Naive thymus-derived CD4-positive, alpha-beta T cell (primary cell): ENCODE measurements at regions of chr12 and their contacts with region 1.

Region 1: GRCh38 chr12:50763639-50764285 is at the start of gene ATF1:
- DNase-seq: peak; percentile 78 to 92 (median 90)
- ATAC-seq: peak; percentile 90
- H3K4me3 ChIP-seq: peak within 1 kb of the TSS; percentile 69
- H3K4me3 Mint-ChIP-seq: peak within 1 kb of the TSS; percentile 89 to 97 (median 91)
- H3K27ac ChIP-seq: peak within 1 kb of the TSS; percentile 94
- H3K27ac Mint-ChIP-seq: peak within 1 kb of the TSS; percentile 92 to 99 (median 98)
- H3K4me1 ChIP-seq: peaks cover 12 to 14% of the 10 kb centered on the region in 2 donors
- H3K4me1 Mint-ChIP-seq: peaks cover 30 to 51% (median 45%) of the 10 kb centered on the region in 7 donors
- H3K27me3 ChIP-seq: no peaks in the 10 kb centered on the region
- H3K27me3 Mint-ChIP-seq: no peaks in the 10 kb centered on the region
- total RNA-seq, gene ATF1: 23.8 to 53.9 (median 51.3) TPM

Region 2: GRCh38 chr12:50411051-50411660 is 352.6 kb before region 1 on chr12:
- CTCF ChIA-PET with region 1: no interaction called
- POLR2A ChIA-PET with region 1: no interaction called
- intact Hi-C with region 1: no loop called
- DNase-seq: no peak
- ATAC-seq: no peak
- H3K4me3 ChIP-seq: no peak overlapping the region
- H3K4me3 Mint-ChIP-seq: no peak overlapping the region
- H3K27ac ChIP-seq: no peak overlapping the region
- H3K27ac Mint-ChIP-seq: no peak overlapping the region
- H3K4me1 ChIP-seq: no peaks in the 10 kb centered on the region
- H3K4me1 Mint-ChIP-seq: peaks cover 12 to 39% (median 32%) of the 10 kb centered on the region in 7 donors
- H3K27me3 ChIP-seq: no peaks in the 10 kb centered on the region
- H3K27me3 Mint-ChIP-seq: no peaks in the 10 kb centered on the region

Region 3: GRCh38 chr12:50517456-50518048 is 246.2 kb before region 1 on chr12:
- CTCF ChIA-PET with region 1: no interaction called
- POLR2A ChIA-PET with region 1: no interaction called
- intact Hi-C with region 1: loop called in 1 of 2 experiments (anchors 2 kb)
- DNase-seq: peak in 5 of 9 donors; percentile 19 to 53 (median 36)
- ATAC-seq: peak; percentile 82
- H3K4me3 ChIP-seq: no peak overlapping the region
- H3K4me3 Mint-ChIP-seq: no peak overlapping the region
- H3K27ac ChIP-seq: peak overlapping the region; percentile 65
- H3K27ac Mint-ChIP-seq: no peak overlapping the region
- H3K4me1 ChIP-seq: peaks cover 19 to 81% of the 10 kb centered on the region in 2 donors
- H3K4me1 Mint-ChIP-seq: peaks cover 43 to 65% (median 58%) of the 10 kb centered on the region in 7 donors
- H3K27me3 ChIP-seq: no peaks in the 10 kb centered on the region
- H3K27me3 Mint-ChIP-seq: no peaks in the 10 kb centered on the region

Region 4: GRCh38 chr12:50564237-50564947 is 199.4 kb before region 1 on chr12:
- CTCF ChIA-PET with region 1: no interaction called
- POLR2A ChIA-PET with region 1: no interaction called
- intact Hi-C with region 1: no loop called
- DNase-seq: no peak
- ATAC-seq: no peak
- H3K4me3 ChIP-seq: no peak overlapping the region
- H3K4me3 Mint-ChIP-seq: peak overlapping the region in 3 of 10 donors; percentile 4 to 52 (median 24)
- H3K27ac ChIP-seq: no peak overlapping the region
- H3K27ac Mint-ChIP-seq: peak overlapping the region in 6 of 9 donors; percentile 3 to 67 (median 34)
- H3K4me1 ChIP-seq: no peaks in the 10 kb centered on the region
- H3K4me1 Mint-ChIP-seq: peaks cover 30 to 84% (median 75%) of the 10 kb centered on the region in 7 donors
- H3K27me3 ChIP-seq: no peaks in the 10 kb centered on the region
- H3K27me3 Mint-ChIP-seq: no peaks in the 10 kb centered on the region

Region 5: GRCh38 chr12:50715174-50715573 is 48.6 kb before region 1 on chr12:
- CTCF ChIA-PET with region 1: no interaction called
- POLR2A ChIA-PET with region 1: no interaction called
- intact Hi-C with region 1: no loop called
- DNase-seq: no peak
- ATAC-seq: no peak
- H3K4me3 ChIP-seq: no peak overlapping the region
- H3K4me3 Mint-ChIP-seq: no peak overlapping the region
- H3K27ac ChIP-seq: no peak overlapping the region
- H3K27ac Mint-ChIP-seq: peak overlapping the region in 4 of 9 donors; percentile 17 to 45 (median 18)
- H3K4me1 ChIP-seq: no peaks in the 10 kb centered on the region
- H3K4me1 Mint-ChIP-seq: no peaks in the 10 kb centered on the region
- H3K27me3 ChIP-seq: no peaks in the 10 kb centered on the region
- H3K27me3 Mint-ChIP-seq: no peaks in the 10 kb centered on the region

Region 6: DNA sequence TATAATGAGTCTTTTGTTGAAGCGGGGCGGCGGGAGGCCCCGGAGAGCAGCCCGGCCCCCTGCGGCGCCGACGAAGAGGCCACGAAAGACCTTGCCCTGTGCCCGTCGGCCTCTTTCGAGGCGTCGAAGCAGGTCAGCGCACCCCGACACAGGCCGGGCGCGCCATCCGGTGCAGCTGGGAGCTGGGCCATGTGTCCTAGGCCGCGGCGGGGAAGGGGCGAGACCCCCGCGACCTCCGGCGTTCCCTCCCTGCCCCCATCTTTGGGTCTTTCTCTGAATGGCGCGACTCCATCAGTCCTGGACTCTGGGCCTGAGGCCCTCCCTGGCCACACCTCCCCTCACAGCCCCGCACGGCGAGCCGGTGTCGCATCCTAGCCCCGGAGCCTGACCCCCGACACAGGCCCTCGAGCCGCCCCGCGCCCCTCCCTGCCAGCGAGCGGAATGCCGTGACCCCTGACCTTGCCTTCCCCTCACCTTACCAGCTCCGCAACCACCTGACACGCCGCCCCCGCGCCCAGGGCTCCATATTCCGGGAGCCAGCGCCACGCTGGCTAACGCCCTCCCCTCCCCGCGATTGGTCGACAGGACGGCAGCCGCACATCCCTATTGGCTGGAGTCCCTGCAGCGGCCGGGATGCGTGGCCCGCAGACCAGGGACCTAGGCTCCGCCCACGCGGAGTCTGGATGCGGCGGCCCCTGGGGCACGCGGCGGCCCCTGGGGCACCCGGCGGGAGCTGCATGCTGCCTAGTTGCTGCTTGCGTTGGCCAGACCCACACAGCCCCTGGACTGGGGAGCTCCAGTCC is 262.3 kb after region 1 on chr12 and contains the start of gene SLC11A2:
- CTCF ChIA-PET with region 1: interaction called, 4 read pairs
- POLR2A ChIA-PET with region 1: interaction called, 33 read pairs
- intact Hi-C with region 1: loop called (anchors 1 to 2 kb)
- DNase-seq: peak; percentile 79 to 93 (median 88)
- ATAC-seq: peak; percentile 96
- H3K4me3 ChIP-seq: peak within 1 kb of the TSS; percentile 86
- H3K4me3 Mint-ChIP-seq: peak within 1 kb of the TSS; percentile 91 to 100 (median 98)
- H3K27ac ChIP-seq: peak within 1 kb of the TSS; percentile 80
- H3K27ac Mint-ChIP-seq: peak within 1 kb of the TSS; percentile 90 to 99 (median 97)
- H3K4me1 ChIP-seq: peaks cover 14 to 22% of the 10 kb centered on the region in 2 donors
- H3K4me1 Mint-ChIP-seq: peaks cover 39 to 65% (median 54%) of the 10 kb centered on the region in 7 donors
- H3K27me3 ChIP-seq: no peaks in the 10 kb centered on the region
- H3K27me3 Mint-ChIP-seq: peaks cover 0 to 13% (median 0%) of the 10 kb centered on the region in 5 donors
- total RNA-seq, gene SLC11A2: 49.3 to 65.4 (median 61.0) TPM

Region 7: DNA sequence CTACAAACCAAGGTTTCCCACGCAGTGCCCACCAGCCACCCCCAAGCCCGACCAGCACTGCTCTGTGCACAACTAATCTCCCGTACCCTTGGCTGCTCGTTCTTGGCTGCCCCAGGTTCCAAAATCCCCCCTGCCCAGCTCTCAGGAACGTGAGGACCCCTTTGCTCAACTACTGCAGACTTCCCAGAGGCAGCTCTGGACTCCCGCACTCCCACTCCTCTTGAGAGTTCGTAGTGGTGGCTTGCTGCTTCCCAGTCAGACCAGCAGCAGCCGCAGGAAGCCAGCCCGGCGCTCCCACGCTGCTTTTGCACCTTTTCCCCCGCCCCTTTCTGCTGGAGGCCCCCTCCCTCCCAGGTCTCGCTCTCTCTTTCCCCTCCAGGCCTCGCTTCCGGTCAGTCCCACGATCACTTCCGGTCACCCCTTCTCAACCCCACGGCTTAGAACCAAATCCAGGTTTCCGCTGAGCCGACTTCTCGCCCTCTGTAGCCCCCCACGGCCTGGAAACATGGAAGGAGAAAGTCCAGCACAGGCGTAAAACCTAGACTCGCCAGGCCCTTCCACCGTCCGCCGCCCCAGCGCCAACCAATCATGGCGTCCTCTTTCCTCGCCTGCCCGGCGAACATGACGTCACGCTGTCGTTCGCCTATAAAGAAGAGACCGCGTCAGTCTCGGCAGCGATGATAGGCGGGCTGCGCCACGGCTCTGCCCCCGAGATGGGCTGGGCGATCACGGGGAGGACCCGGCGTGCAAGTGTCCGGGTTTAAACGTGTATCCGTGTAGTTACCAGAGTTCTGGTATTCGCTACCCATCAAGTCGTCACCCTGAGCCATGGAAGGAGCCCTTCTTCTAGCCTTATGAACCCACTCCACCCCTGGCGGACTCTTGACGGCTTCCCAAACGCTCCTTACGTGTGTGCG is 409.0 kb after region 1 on chr12 and contains the start of gene TFCP2:
- CTCF ChIA-PET with region 1: no interaction called
- POLR2A ChIA-PET with region 1: no interaction called
- intact Hi-C with region 1: loop called in 1 of 2 experiments (anchors 1 kb)
- DNase-seq: peak; percentile 81 to 93 (median 91)
- ATAC-seq: peak; percentile 98
- H3K4me3 ChIP-seq: peak within 1 kb of the TSS; percentile 98
- H3K4me3 Mint-ChIP-seq: peak within 1 kb of the TSS in 5 of 10 donors; percentile 77 to 89 (median 87)
- H3K27ac ChIP-seq: peak within 1 kb of the TSS; percentile 99
- H3K27ac Mint-ChIP-seq: peak within 1 kb of the TSS in 6 of 9 donors; percentile 56 to 90 (median 82)
- H3K4me1 ChIP-seq: peaks cover 5 to 7% of the 10 kb centered on the region in 2 donors
- H3K4me1 Mint-ChIP-seq: peaks cover 9 to 24% (median 14%) of the 10 kb centered on the region in 7 donors
- H3K27me3 ChIP-seq: no peaks in the 10 kb centered on the region
- H3K27me3 Mint-ChIP-seq: no peaks in the 10 kb centered on the region
- total RNA-seq, gene TFCP2: 23.4 to 42.3 (median 36.6) TPM

Region 8: GRCh38 chr12:51341259-51342007 is 577.7 kb after region 1 on chr12:
- CTCF ChIA-PET with region 1: no interaction called
- POLR2A ChIA-PET with region 1: no interaction called
- intact Hi-C with region 1: loop called in 1 of 2 experiments (anchors 5 kb)
- DNase-seq: peak; percentile 36 to 79 (median 69)
- ATAC-seq: peak; percentile 96
- H3K4me3 ChIP-seq: peak overlapping the region; percentile 6
- H3K4me3 Mint-ChIP-seq: peak overlapping the region; percentile 41 to 84 (median 65)
- H3K27ac ChIP-seq: peak overlapping the region; percentile 39
- H3K27ac Mint-ChIP-seq: peak overlapping the region; percentile 38 to 92 (median 84)
- H3K4me1 ChIP-seq: peaks cover 4 to 8% of the 10 kb centered on the region in 2 donors
- H3K4me1 Mint-ChIP-seq: peaks cover 14 to 26% (median 16%) of the 10 kb centered on the region in 7 donors
- H3K27me3 ChIP-seq: no peaks in the 10 kb centered on the region
- H3K27me3 Mint-ChIP-seq: no peaks in the 10 kb centered on the region

Region 9: DNA sequence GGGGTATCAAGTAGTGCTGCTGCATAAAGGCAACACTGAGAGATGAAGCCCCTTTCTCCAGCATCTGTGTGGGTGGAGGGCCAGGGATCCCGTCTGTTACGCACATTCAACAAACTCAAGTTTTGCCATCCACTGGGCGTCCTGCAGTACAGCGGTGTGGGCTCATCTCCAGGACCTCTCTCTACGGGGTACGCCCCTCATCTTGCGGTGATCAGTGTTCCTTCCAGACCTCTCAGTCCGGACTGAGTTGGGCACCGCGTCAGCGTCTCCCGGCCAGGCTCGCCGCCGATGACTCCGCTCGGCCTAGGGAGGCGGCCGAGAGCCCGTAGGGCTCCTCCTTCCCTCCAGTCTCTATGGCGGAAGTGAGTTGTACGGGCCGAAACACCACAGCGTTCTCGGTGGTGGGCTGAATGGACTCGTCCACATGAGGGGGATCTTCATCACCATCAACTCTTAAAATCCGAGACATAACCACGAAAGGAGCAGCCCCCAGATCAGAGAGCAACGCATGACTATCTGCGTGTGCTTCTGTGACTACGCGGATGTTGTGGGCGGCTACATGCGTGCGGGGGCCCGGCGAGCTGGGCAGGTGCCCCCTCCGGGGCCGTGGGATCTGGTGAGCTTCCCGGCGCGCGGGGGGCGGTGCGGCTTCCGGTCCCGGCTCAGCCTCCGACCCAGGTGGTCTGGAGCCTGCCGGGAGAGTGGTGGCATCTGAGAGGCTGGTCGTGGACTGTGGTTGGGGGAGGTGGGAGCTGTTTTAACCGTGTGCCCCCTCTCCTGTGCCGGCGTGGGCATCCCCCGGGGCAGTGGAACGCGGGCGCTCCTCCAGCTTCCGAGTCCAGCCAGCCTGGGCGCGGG is 1305.8 kb after region 1 on chr12 and contains the start of gene ATG101:
- CTCF ChIA-PET with region 1: no interaction called
- POLR2A ChIA-PET with region 1: no interaction called
- intact Hi-C with region 1: loop called in 1 of 2 experiments (anchors 5 kb)
- DNase-seq: peak; percentile 80 to 92 (median 89)
- ATAC-seq: peak; percentile 97
- H3K4me3 ChIP-seq: peak within 1 kb of the TSS; percentile 96
- H3K4me3 Mint-ChIP-seq: peak within 1 kb of the TSS; percentile 88 to 99 (median 96)
- H3K27ac ChIP-seq: peak within 1 kb of the TSS; percentile 87
- H3K27ac Mint-ChIP-seq: peak within 1 kb of the TSS; percentile 97 to 100 (median 98)
- H3K4me1 ChIP-seq: peaks cover 19 to 31% of the 10 kb centered on the region in 2 donors
- H3K4me1 Mint-ChIP-seq: peaks cover 35 to 59% (median 49%) of the 10 kb centered on the region in 7 donors
- H3K27me3 ChIP-seq: no peaks in the 10 kb centered on the region
- H3K27me3 Mint-ChIP-seq: peaks cover 0 to 5% (median 0%) of the 10 kb centered on the region in 5 donors
- total RNA-seq, gene ATG101: 20.7 to 39.7 (median 34.3) TPM